Aorta (tissue), 5 donors: ENCODE measurements at regions of chr7 and their contacts with region 1.

Region 1: DNA sequence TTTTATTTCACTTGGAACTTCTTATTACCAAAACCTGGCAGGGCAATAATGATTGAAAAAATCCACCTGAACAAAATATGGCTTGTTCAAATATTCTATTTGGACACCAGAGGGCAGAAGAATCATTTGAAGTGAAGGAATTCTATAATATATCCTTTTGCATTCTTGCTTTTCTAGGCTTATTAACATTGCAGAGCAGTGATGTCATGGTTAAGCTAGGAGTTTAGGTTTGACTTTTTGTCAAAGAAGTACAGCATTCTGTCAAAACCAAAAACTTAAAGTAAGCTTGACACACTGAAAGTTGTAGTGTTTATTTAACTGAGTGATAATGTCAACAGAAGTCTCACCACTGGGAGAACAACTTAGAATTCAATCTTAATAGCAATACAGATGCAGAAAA is 156.0 kb downstream of the SEMA3D start:
- DNase-seq: no peak
- ATAC-seq: no peak
- H3K4me3 ChIP-seq: no peak overlapping the region
- H3K27ac ChIP-seq: no peak overlapping the region
- H3K4me1 ChIP-seq: no peaks in the 10 kb centered on the region
- H3K27me3 ChIP-seq: no peaks in the 10 kb centered on the region

Region 2: DNA sequence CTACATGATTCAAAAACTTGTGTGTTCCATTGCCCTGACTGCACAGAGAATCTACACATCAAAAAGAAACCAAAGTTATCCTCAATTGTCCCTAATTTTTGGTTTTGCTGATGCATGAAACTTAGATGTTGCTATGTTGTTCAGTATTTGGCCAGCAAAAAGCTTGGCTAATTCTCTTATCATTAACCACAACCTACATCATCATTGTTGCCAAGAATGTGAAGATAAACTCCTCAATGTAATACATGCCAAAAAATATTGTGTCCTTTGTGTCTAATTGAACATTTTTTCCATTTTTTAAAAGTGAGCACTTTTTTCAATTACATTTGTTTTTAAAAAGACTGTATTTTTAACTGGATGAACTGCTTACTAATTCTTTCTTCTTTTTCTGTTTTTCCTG is 424.0 kb after region 1 on chr7:
- intact Hi-C with region 1: loop called in 1 of 2 experiments (anchors 10 kb)
- DNase-seq: no peak
- ATAC-seq: no peak
- H3K4me3 ChIP-seq: no peak overlapping the region
- H3K27ac ChIP-seq: no peak overlapping the region
- H3K4me1 ChIP-seq: no peaks in the 10 kb centered on the region
- H3K27me3 ChIP-seq: no peaks in the 10 kb centered on the region

Region 3: DNA sequence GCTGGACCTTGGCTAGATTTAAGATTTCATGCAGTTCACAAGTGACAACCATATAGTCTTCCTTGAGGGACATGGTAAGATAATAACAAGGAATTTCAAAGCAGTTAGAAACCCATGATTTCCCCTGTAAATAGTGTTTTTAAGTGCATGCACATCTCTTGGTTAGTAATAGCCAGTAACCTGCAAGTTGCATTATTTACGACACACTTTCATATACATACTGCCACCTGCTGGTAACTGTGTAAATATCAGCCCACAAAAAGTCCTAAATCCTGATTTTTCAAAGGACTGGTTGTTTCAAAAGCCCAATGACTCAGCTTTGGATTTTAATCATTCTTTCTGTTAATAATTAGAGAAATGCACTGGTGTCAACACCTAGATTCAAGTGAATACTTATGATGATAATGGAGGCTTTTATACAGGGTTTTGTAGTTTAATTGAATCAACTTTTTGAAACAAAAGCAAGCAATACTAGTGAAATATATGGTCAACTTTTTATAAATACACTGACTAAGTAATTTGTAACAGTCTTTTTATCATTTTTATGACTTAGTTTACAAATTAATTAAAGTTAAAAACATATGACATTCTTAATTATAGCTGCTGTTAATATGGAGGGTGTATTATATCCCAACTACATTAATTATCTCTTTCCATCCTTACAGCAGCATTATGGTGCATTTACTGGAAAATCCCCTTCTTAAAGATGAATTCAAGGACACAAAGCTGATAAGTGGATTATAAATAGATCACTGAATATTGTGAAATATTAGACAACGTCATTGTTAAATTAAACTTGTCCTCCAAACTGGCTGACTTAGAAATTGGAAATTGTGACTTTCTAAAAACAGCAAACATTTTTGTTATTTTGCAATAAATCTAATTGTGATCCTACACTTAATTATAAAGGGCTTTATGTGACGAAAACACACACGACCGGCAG is 523.6 kb after region 1 on chr7:
- intact Hi-C with region 1: loop called in 1 of 2 experiments (anchors 5 kb)
- DNase-seq: no peak
- ATAC-seq: peak; percentile 86
- H3K4me3 ChIP-seq: no peak overlapping the region
- H3K27ac ChIP-seq: no peak overlapping the region
- H3K4me1 ChIP-seq: no peaks in the 10 kb centered on the region
- H3K27me3 ChIP-seq: no peaks in the 10 kb centered on the region